IMR-90 (cell line): ENCODE measurements at regions of chr3 and their contacts with region 1.

Region 1: GRCh38 chr3:58994746-58995330 is 55.0 kb downstream of the CFAP20DC start:
- DNase-seq: peak; percentile 79
- ATAC-seq: peak; percentile 30; the same call in 1 of the 2 replicates
- H3K4me3 ChIP-seq: no peak overlapping the region
- H3K27ac ChIP-seq: no peak overlapping the region
- H3K4me1 ChIP-seq: peaks cover 16% of the 10 kb centered on the region
- H3K27me3 ChIP-seq: no peaks in the 10 kb centered on the region
- CTCF ChIP-seq: peak; percentile 85
- POLR2A ChIP-seq: no peak
- RAD21 ChIP-seq: peak; percentile 82

Region 2: DNA sequence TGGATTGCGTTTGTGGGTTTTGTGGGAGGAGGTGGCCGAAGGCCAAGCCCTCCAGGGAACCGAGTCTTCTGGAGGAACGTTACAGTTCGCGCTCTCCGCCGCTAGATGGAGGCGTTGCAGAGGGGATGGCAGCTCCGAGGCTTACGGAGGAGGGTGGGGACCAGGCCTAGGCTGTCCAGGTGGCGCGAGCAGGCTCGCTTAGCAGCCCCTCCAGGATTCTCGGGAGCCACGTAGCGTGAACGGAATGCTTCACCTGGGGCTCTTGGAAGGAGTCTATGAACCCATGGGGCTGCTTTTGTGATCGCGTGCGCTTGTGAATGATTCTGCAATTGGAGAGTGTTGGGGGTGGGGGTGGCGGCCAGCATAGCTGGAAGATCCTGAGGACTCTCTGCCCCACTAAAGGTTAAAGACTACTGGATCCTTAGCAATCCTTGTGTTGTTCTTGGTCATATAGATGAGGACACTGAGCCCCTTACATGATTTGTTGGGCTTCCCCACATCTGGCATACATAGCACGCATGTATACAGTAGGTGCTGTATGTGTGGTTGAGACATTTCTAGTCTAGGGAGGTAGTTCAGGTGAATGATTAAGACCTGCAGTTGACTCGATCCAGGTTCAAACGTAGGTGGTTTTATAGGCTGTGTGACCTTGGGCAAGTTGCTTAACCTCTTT is 354.0 kb before region 1 on chr3:
- CTCF ChIA-PET with region 1: no interaction called
- POLR2A ChIA-PET with region 1: no interaction called
- dilution Hi-C with region 1: no loop called
- in situ Hi-C with region 1: no loop called
- intact Hi-C with region 1: loop called (anchors 5 kb)
- DNase-seq: peak; percentile 74
- ATAC-seq: peak; percentile 97
- H3K4me3 ChIP-seq: no peak overlapping the region
- H3K27ac ChIP-seq: no peak overlapping the region
- H3K4me1 ChIP-seq: peaks cover 7% of the 10 kb centered on the region; the same call in 1 of the 2 replicates
- H3K27me3 ChIP-seq: no peaks in the 10 kb centered on the region
- CTCF ChIP-seq: peak; percentile 92
- POLR2A ChIP-seq: peak; percentile 27; the same call in 1 of the 2 replicates
- RAD21 ChIP-seq: peak; percentile 98

Region 3: DNA sequence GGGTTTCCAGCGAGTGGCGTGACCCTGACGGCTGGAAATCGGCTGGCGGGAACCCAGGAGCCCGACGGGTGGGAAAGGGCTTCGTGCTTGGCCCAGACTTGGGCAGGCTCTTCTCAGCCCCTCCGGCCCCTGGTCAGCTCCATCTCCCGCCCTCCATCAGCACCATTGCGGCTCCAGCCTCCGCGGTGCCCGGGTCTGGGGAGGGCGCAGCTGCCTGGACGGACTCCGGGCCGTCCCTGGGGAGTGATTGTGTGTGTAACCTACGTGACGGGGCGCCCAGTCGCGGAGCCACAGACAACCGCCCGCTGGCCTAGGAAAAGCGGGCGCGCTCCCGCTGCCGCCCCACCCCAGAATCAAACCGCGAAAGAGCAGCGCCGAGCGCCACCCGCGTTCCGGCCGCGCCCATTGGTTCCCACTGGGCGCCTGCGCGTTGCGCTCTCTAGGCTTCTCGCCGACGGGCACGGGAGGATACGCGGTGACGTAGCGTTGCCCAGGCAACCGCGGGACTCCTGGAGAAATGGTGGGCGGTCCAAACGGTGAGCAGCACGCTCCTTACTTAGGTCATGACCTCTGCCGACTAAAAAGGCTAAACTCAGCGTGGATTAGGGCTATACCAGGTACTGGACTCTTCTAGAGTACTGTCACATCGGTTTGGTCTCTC is 55.0 kb after region 1 on chr3 and contains the start of gene CFAP20DC:
- CTCF ChIA-PET with region 1: interaction called, 12 read pairs
- POLR2A ChIA-PET with region 1: no interaction called
- dilution Hi-C with region 1: no loop called
- in situ Hi-C with region 1: no loop called
- intact Hi-C with region 1: loop called (anchors 1 kb)
- DNase-seq: peak; percentile 89
- ATAC-seq: peak; percentile 100
- H3K4me3 ChIP-seq: peak within 1 kb of the TSS; percentile 88
- H3K27ac ChIP-seq: peak within 1 kb of the TSS; percentile 81
- H3K4me1 ChIP-seq: 0 out of 2 replicates have a peak, but pooled peaks cover 2% of the 10 kb centered on the region
- H3K27me3 ChIP-seq: no peaks in the 10 kb centered on the region
- CTCF ChIP-seq: no peak
- POLR2A ChIP-seq: peak; percentile 85
- RAD21 ChIP-seq: no peak
- total RNA-seq, gene CFAP20DC: 1.6 and 2.8 TPM in 2 replicates

Region 4: DNA sequence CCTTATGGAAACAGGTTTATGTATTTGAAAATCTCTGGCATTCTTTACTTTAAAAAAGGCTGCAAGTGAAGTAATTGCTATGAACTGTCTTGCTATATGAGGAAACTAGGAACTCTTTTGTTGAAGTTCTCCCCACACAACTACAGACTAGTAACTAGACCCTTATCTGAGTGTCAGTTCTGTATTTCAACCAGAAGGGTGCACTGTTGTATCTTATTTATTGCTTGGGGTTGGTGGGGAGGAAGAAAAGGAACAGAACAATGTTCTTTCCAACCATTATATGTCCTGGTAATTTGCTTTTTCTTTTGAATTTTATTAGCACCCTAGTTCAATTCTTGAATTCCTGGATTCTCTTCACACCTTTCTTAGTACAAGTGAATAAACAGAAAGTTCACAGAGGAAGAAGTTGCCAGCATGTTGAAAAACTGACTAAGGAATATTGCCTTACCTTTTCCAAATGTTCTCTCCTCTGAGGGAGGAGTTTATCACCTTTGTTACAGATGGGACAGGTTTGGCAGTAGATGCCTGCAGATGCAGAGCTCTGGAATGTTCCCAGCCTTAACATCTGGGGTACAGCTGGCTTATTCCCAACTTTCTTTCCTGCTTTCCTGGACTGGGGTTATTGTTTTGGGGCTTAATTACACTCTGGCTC is 217.4 kb after region 1 on chr3:
- CTCF ChIA-PET with region 1: no interaction called
- POLR2A ChIA-PET with region 1: no interaction called
- dilution Hi-C with region 1: no loop called
- in situ Hi-C with region 1: loop called (anchors 10 kb)
- intact Hi-C with region 1: loop called (anchors 1 kb)
- DNase-seq: peak; percentile 60
- ATAC-seq: peak; percentile 97
- H3K4me3 ChIP-seq: no peak overlapping the region
- H3K27ac ChIP-seq: no peak overlapping the region
- H3K4me1 ChIP-seq: no peaks in the 10 kb centered on the region; the same call in 1 of the 2 replicates
- H3K27me3 ChIP-seq: no peaks in the 10 kb centered on the region
- CTCF ChIP-seq: peak; percentile 78
- POLR2A ChIP-seq: no peak
- RAD21 ChIP-seq: peak; percentile 85

Region 5: DNA sequence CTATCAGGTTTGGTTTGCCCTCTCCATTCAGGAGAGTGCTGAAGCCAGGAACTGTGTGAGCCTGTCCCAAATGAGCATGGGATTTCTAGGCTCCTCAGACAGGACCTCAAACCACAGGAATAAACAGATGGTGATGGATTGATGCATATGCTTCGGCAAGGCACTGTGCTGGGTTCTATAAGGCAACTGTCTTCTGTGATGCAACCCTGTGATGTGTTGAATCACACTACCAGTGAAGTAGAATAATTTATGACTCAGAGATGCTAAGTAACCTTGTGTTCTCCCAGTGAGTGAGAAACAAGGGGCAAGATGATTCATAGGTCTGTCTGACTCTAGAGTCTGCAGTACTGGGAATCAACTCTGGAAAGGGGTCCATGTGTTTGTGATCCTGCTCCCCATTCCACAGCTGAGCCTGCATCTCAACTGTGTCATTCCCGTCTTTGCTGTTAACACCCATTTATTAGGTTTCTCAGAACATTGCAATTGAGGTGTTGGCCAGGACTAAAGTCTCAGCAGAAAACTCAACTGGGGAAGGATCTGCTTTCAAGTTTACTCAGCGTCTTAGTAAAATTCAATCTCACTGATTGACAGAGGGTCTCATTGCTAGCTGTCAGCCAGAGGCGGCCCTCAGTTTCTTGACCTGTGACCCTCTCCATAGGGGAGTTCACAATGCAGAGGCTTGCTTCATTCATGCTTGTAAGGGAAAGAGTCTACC is 565.0 kb after region 1 on chr3:
- CTCF ChIA-PET with region 1: no interaction called
- POLR2A ChIA-PET with region 1: no interaction called
- dilution Hi-C with region 1: no loop called
- in situ Hi-C with region 1: loop called (anchors 25 kb)
- intact Hi-C with region 1: no loop called
- DNase-seq: peak; percentile 97
- ATAC-seq: peak; percentile 90
- H3K4me3 ChIP-seq: no peak overlapping the region
- H3K27ac ChIP-seq: no peak overlapping the region
- H3K4me1 ChIP-seq: peaks cover 13% of the 10 kb centered on the region
- H3K27me3 ChIP-seq: no peaks in the 10 kb centered on the region
- CTCF ChIP-seq: no peak
- POLR2A ChIP-seq: no peak
- RAD21 ChIP-seq: no peak

Region 6: GRCh38 chr3:59809710-59810444 is 815.0 kb after region 1 on chr3:
- CTCF ChIA-PET with region 1: no interaction called
- POLR2A ChIA-PET with region 1: no interaction called
- dilution Hi-C with region 1: no loop called
- in situ Hi-C with region 1: loop called (anchors 25 kb)
- intact Hi-C with region 1: no loop called
- DNase-seq: peak; percentile 57
- ATAC-seq: peak; percentile 33; the same call in 1 of the 2 replicates
- H3K4me3 ChIP-seq: no peak overlapping the region
- H3K27ac ChIP-seq: peak overlapping the region; percentile 71
- H3K4me1 ChIP-seq: peaks cover 10% of the 10 kb centered on the region
- H3K27me3 ChIP-seq: no peaks in the 10 kb centered on the region
- CTCF ChIP-seq: peak; percentile 47
- POLR2A ChIP-seq: no peak
- RAD21 ChIP-seq: peak; percentile 47